IMR-90 (cell line): ENCODE measurements at regions of chr20 and their contacts with region 1.

Region 1: GRCh38 chr20:10673988-10674711 is at the start of gene JAG1:
- DNase-seq: peak; percentile 95
- ATAC-seq: peak; percentile 76
- H3K4me3 ChIP-seq: peak within 1 kb of the TSS; percentile 93
- H3K27ac ChIP-seq: peak within 1 kb of the TSS; percentile 92
- H3K4me1 ChIP-seq: peaks cover 6% of the 10 kb centered on the region
- H3K27me3 ChIP-seq: no peaks in the 10 kb centered on the region
- CTCF ChIP-seq: no peak
- POLR2A ChIP-seq: peak; percentile 74
- RAD21 ChIP-seq: no peak; the same call in 1 of the 2 replicates
- total RNA-seq, gene JAG1: 19.4 and 22.6 TPM in 2 replicates

Region 2: GRCh38 chr20:10553326-10553984 is 120.7 kb before region 1 on chr20:
- CTCF ChIA-PET with region 1: interaction called, 6 read pairs
- POLR2A ChIA-PET with region 1: interaction called, 3 read pairs
- dilution Hi-C with region 1: no loop called
- in situ Hi-C with region 1: no loop called
- intact Hi-C with region 1: loop called (anchors 1 kb)
- DNase-seq: peak; percentile 82
- ATAC-seq: peak; percentile 88
- H3K4me3 ChIP-seq: no peak overlapping the region
- H3K27ac ChIP-seq: no peak overlapping the region
- H3K4me1 ChIP-seq: peaks cover 11% of the 10 kb centered on the region
- H3K27me3 ChIP-seq: no peaks in the 10 kb centered on the region
- CTCF ChIP-seq: peak; percentile 85
- POLR2A ChIP-seq: 0 out of 2 replicates have a peak, but pooled peaks have one; percentile 25
- RAD21 ChIP-seq: peak; percentile 95

Region 3: DNA sequence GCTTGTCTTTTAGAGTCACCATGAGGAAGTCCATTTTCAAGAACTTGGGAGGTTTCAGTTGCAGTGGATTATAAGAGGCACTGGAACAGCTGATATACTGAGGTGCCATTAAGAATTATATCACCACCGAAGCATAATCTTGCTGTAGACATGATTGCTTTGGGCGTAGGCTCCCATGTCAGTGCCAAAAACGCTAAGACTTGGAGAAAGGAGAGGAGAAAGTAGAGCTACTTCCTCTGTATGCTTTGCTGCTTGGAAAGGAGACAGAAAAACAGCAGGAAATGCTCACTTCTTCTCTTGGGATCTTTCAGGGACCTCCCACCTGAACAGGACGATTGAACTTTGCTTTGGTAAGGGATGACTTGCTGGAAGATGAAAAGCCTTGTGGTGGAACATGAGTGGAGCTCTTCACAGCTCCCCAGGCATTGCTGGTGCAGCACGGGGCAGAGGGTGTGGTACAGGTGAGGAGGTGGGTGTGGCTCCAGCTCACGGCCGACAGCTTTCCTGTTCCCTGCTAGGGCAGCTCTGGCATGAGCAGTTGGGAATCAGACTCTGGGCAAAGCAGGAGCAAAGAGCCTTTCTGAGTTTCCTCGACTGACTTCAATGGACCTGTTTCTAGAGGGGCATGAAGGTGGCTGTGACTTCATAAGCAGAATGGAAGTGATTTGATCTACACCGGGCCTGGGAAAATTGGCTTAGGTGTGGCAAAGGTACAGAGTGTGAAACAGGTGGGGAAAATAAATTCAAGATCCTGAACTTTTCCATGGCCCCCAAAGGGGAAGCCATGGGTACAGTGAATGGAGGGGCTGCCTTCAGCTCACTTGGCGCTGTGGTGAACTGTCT is 190.1 kb after region 1 on chr20:
- CTCF ChIA-PET with region 1: no interaction called
- POLR2A ChIA-PET with region 1: no interaction called
- dilution Hi-C with region 1: no loop called
- in situ Hi-C with region 1: no loop called
- intact Hi-C with region 1: loop called (anchors 5 kb)
- DNase-seq: no peak
- ATAC-seq: peak; percentile 24
- H3K4me3 ChIP-seq: no peak overlapping the region
- H3K27ac ChIP-seq: peak overlapping the region; percentile 51; the same call in 1 of the 2 replicates
- H3K4me1 ChIP-seq: peaks cover 13% of the 10 kb centered on the region
- H3K27me3 ChIP-seq: no peaks in the 10 kb centered on the region; the same call in 1 of the 2 replicates
- CTCF ChIP-seq: no peak
- POLR2A ChIP-seq: no peak
- RAD21 ChIP-seq: no peak

Region 4: GRCh38 chr20:11012975-11013374 is 338.8 kb after region 1 on chr20:
- CTCF ChIA-PET with region 1: no interaction called
- POLR2A ChIA-PET with region 1: no interaction called
- dilution Hi-C with region 1: no loop called
- in situ Hi-C with region 1: no loop called
- intact Hi-C with region 1: loop called (anchors 5 kb)
- DNase-seq: peak; percentile 50
- ATAC-seq: no peak
- H3K4me3 ChIP-seq: no peak overlapping the region
- H3K27ac ChIP-seq: no peak overlapping the region
- H3K4me1 ChIP-seq: no peaks in the 10 kb centered on the region; the same call in 1 of the 2 replicates
- H3K27me3 ChIP-seq: no peaks in the 10 kb centered on the region; the same call in 1 of the 2 replicates
- CTCF ChIP-seq: no peak
- POLR2A ChIP-seq: no peak
- RAD21 ChIP-seq: no peak

Region 5: GRCh38 chr20:11204926-11205768 is 531.0 kb after region 1 on chr20:
- CTCF ChIA-PET with region 1: interaction called, 3 read pairs
- POLR2A ChIA-PET with region 1: no interaction called
- dilution Hi-C with region 1: no loop called
- in situ Hi-C with region 1: no loop called
- intact Hi-C with region 1: loop called (anchors 1 kb)
- DNase-seq: peak; percentile 71
- ATAC-seq: peak; percentile 90
- H3K4me3 ChIP-seq: no peak overlapping the region
- H3K27ac ChIP-seq: no peak overlapping the region
- H3K4me1 ChIP-seq: no peaks in the 10 kb centered on the region; the same call in none of the 2 replicates
- H3K27me3 ChIP-seq: no peaks in the 10 kb centered on the region
- CTCF ChIP-seq: peak; percentile 72
- POLR2A ChIP-seq: no peak
- RAD21 ChIP-seq: peak; percentile 77

Region 6: DNA sequence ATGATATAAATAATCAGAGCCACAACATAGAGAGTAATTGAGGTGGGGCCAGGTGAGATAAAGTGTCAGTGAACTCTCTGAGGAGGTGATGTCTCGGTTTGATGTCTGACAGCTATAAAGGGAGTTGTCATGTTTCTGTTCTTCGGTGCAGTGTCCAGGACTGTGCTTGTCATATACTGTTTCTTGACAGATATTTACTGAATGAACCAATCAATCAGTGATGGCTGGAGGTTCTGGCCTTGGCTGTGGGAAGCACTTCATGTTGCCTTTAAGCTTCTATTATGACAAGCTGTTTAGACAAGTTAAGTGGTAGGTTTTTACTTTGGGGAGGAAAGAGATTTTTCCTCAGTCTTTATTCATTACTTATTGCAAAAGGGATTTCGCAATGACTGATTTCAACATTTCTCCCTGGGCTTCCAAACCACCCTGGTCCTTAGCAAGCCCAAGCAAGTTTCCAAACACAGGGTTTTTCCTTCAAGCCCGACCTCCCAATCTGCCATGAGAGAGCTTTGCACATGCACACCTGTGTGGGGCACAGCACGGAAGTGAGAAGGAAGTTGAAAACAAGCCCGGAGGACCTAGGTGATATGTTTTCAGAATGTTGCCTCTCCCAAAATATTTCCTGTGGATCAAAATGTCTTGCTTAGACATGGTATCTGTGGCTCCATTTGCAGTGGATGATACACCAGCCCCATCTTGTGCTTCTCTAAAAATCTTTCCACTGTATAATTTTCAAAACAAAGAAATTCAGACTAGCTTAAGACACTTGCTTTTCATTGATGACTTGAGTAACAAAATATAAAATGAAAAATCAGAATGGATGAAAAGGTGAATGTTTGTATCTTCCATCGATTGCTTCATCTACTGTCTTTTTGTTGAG is 676.2 kb after region 1 on chr20:
- CTCF ChIA-PET with region 1: no interaction called
- POLR2A ChIA-PET with region 1: no interaction called
- dilution Hi-C with region 1: no loop called
- in situ Hi-C with region 1: no loop called
- intact Hi-C with region 1: loop called (anchors 10 kb)
- DNase-seq: peak; percentile 80
- ATAC-seq: peak; percentile 86
- H3K4me3 ChIP-seq: no peak overlapping the region
- H3K27ac ChIP-seq: peak overlapping the region; percentile 28; the same call in 1 of the 2 replicates
- H3K4me1 ChIP-seq: peaks cover 10% of the 10 kb centered on the region
- H3K27me3 ChIP-seq: no peaks in the 10 kb centered on the region
- CTCF ChIP-seq: 0 out of 2 replicates have a peak, but pooled peaks have one; percentile 25
- POLR2A ChIP-seq: no peak
- RAD21 ChIP-seq: peak; percentile 30; the same call in 1 of the 2 replicates